ENCODE measurements at regions of chr9 and their contacts with region 1.

Region 1: DNA sequence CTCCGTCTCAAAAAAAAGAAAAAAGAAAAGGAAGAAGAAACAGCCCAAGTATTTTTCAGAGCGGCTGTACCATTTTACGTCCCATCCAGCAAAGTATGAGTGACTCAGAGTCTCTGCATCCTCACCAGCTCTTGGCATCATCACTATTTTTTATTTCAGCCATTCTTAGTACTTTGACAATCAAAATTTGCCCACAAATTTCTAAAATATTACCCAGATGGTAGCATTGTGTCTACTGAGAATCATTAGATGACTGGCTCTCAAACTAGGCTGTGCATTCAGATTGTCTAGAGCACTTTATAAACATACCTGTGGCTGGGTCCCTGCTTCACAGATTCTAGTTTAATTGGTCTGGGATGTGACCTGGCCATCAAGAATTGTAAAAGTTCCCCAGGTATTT is 21.6 kb upstream of the MELK start:
- DNase-seq: no peak
- H3K4me3 ChIP-seq: no peak overlapping the region
- H3K27ac ChIP-seq: no peak overlapping the region
- H3K4me1 ChIP-seq: no peaks in the 10 kb centered on the region
- H3K27me3 ChIP-seq: no peaks in the 10 kb centered on the region
- CTCF ChIP-seq: no peak

Region 2: GRCh38 chr9:36450110-36450732 is 100.9 kb before region 1 on chr9:
- CTCF ChIA-PET with region 1: no interaction called
- POLR2A ChIA-PET with region 1: no interaction called
- intact Hi-C with region 1: loop called (anchors 10 kb)
- DNase-seq: peak; percentile 79
- H3K4me3 ChIP-seq: no peak overlapping the region
- H3K27ac ChIP-seq: no peak overlapping the region
- H3K4me1 ChIP-seq: peaks cover 3% of the 10 kb centered on the region
- H3K27me3 ChIP-seq: no peaks in the 10 kb centered on the region
- CTCF ChIP-seq: peak; percentile 84